Activated CD8-positive, alpha-beta T cell treated with anti-CD3 and anti-CD28 coated beads for 36 hours (primary cell): ENCODE measurements at regions of chr14 and their contacts with region 1.

Region 1: DNA sequence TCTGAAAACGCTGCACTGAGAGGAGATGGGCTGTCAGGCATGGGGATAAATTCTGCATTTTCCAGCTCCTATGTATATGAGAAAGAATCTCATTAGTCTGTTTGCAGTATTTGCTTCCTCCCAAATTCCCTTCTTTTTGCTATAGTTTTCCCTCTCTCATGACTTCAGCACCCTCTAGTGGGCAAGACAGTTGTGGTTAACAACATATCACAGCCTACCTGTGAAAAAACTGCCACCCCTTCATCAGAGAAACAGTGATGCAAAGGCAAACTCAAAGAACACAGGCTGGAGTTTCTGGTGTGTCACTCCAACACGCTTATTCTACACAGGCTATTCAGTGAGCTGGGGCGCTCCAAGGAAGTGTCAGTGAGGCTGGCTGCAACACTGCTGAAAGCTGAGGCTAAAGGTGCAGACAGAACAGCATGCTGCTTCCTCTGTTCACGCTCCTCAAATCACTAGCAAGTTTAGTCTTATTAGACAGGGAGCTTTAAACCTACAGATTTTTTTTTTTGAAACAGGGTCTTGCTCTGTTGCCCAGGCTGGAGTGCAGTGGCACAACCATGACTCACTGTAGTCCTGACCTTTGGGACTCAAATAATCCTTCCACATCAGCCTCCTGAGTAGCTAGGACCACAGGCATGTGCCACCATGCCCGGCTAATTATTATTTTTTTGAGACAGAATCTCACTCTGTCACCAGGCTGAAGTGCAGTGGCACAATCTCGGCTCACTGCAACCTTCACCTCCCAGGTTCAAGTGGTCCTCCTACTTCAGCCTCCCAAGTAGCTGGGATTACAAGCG is 19.3 kb downstream of the ZC2HC1C start:
- DNase-seq: peak; percentile 59
- ATAC-seq: peak; percentile 51
- H3K4me3 Mint-ChIP-seq: no peak overlapping the region
- H3K27ac Mint-ChIP-seq: no peak overlapping the region
- H3K4me1 Mint-ChIP-seq: peaks cover under 1% of the 10 kb centered on the region
- H3K27me3 Mint-ChIP-seq: no peaks in the 10 kb centered on the region
- CTCF ChIP-seq: peak; percentile 84

Region 2: DNA sequence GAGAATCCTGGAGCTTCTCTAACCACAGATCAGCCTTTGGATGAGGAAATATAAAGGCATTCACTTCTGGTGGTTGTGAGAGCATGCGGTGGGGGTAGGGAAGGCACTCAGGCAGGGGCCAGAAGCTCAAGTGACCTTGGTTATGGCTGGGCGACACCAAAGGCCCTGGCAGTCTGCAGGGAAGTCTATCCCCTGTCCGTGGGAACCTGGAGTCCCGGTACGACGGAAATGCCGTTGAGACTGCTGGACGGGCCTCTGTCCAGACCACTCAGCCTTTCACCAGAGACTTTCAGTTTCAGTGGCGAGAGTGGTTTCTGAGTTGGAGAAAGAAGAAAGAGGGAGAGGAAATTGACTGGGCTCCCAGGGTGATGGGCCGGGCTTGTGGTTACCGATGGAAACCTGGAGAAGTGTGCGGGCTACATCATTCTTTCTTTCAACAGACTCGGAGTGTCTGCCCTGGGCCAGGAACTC is 574.3 kb before region 1 on chr14:
- CTCF ChIA-PET with region 1: no interaction called
- POLR2A ChIA-PET with region 1: no interaction called
- intact Hi-C with region 1: no loop called
- DNase-seq: no peak
- ATAC-seq: no peak
- H3K4me3 Mint-ChIP-seq: no peak overlapping the region
- H3K27ac Mint-ChIP-seq: no peak overlapping the region
- H3K4me1 Mint-ChIP-seq: peaks cover 7% of the 10 kb centered on the region
- H3K27me3 Mint-ChIP-seq: peaks cover 22% of the 10 kb centered on the region
- CTCF ChIP-seq: no peak

Region 3: DNA sequence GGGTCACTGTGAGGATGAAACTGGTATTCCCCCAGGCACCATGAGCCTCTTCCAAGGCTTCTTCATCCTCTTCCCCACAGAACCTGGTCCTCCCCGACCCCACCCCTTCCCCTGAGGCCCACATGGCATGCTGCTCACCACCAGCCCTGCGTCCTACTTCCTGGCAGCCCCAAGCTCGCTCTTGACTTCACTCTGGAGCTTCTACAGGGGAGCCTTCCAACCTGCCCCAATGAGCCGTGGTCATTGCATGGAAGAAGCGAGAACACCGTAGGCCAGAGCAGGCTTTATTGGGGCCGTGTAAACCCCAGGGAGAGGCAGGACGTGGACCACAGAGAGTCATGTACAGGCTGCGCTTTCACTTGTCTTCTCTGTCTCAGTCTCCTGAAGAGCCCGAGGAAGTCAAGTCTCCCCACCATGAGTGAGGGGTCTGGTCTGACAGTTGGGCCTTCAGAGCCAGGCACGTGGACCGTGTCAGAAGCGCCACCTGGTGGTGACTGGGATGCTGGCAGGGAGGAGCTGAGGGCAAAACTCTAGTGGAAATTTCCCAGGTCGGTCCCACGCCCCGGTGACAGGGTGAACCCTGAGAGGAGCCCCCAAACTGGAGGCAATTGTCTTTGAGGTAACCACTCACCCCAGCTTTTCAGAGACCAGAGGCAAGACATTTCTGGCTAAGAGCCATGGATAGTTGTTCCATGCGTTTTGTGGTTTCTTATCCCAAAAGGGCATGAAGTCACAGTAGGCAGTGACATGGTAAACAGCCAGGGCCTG is 183.2 kb before region 1 on chr14:
- CTCF ChIA-PET with region 1: interaction called, 25 read pairs
- POLR2A ChIA-PET with region 1: no interaction called
- intact Hi-C with region 1: no loop called
- DNase-seq: peak; percentile 84
- ATAC-seq: peak; percentile 81
- H3K4me3 Mint-ChIP-seq: no peak overlapping the region
- H3K27ac Mint-ChIP-seq: peak overlapping the region; percentile 55
- H3K4me1 Mint-ChIP-seq: peaks cover 10% of the 10 kb centered on the region
- H3K27me3 Mint-ChIP-seq: no peaks in the 10 kb centered on the region
- CTCF ChIP-seq: peak; percentile 97

Region 4: GRCh38 chr14:74945823-74946682 is 142.7 kb before region 1 on chr14:
- CTCF ChIA-PET with region 1: interaction called, 74 read pairs
- POLR2A ChIA-PET with region 1: no interaction called
- intact Hi-C with region 1: loop called (anchors 2 kb)
- DNase-seq: peak; percentile 87
- ATAC-seq: peak; percentile 82
- H3K4me3 Mint-ChIP-seq: no peak overlapping the region
- H3K27ac Mint-ChIP-seq: no peak overlapping the region
- H3K4me1 Mint-ChIP-seq: peaks cover 14% of the 10 kb centered on the region
- H3K27me3 Mint-ChIP-seq: no peaks in the 10 kb centered on the region
- CTCF ChIP-seq: peak; percentile 92

Region 5: GRCh38 chr14:75063407-75064213 is 25.2 kb before region 1 on chr14 and contains the start of gene ACYP1:
- CTCF ChIA-PET with region 1: interaction called, 10 read pairs
- POLR2A ChIA-PET with region 1: interaction called, 3 read pairs
- intact Hi-C with region 1: no loop called
- DNase-seq: peak; percentile 94
- ATAC-seq: peak; percentile 100
- H3K4me3 Mint-ChIP-seq: peak within 1 kb of the TSS; percentile 100
- H3K27ac Mint-ChIP-seq: peak within 1 kb of the TSS; percentile 95
- H3K4me1 Mint-ChIP-seq: peaks cover 29% of the 10 kb centered on the region
- H3K27me3 Mint-ChIP-seq: no peaks in the 10 kb centered on the region
- CTCF ChIP-seq: no peak
- total RNA-seq, gene ACYP1: 33.9 to 38.6 TPM

Region 6: DNA sequence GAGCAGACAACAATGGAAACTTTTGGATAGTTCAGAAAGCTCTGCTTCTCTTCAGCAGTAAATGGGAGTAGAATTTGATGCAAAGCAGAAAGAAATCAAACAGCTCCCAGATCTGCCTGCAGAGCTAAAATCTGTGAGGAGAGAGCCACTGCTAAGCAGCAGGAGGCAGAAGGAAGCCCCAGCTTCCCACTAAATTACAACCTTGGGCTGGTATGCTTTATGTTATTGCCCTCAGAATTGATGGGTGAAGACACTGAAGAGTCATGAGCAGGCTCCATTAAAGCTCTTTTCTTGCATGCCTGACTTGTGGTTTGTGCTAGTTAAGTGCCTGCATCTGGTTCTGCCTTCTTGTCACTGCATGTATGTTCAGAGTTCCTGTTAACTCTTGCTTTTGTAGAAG is 11.0 kb before region 1 on chr14:
- CTCF ChIA-PET with region 1: interaction called, 11 read pairs
- POLR2A ChIA-PET with region 1: no interaction called
- intact Hi-C with region 1: no loop called
- DNase-seq: no peak
- ATAC-seq: no peak
- H3K4me3 Mint-ChIP-seq: no peak overlapping the region
- H3K27ac Mint-ChIP-seq: no peak overlapping the region
- H3K4me1 Mint-ChIP-seq: no peaks in the 10 kb centered on the region
- H3K27me3 Mint-ChIP-seq: no peaks in the 10 kb centered on the region
- CTCF ChIP-seq: no peak